Heart right ventricle (tissue), 16 donors: ENCODE measurements at regions of chr11 and their contacts with region 1.

Region 1: DNA sequence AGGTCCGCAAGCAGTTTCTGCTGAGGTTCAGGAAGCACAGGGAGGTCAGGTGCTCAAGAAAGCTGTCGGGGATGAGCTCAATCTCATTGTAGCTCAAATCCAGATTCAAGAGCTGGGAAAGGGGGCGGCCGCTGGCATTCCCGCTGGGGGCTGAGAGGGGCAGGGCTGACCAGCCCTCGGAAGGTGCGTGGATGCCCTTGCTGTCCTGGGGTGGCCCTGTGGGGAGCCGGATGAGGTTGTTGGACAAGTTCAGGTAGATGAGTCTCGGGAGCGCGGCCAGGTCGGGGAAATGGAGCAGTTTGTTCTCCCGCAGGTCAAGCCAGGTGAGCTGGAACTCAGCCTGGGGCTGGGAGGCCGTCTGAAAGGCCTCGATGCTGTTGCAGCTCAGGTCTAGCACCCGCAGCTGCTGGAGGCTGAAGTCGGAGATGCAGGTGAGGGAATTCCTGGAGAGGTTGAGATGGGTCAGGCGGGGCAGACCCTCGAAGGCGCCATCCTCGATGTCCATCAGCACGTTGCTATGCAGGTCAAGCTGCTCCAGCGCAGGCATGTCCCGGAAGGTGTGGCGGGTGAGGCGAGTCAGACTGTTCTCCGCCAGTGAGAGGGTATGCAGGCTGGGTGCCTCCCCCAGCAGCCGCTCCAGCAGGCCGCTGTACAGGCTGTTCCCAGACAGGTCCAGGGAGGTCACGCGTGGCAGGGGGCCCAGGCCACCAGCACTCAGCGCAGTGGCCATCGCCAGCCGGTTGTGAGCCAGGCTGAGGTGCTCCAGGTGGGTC is 9.8 kb downstream of the LRRC32 start:
- DNase-seq: no peak
- ATAC-seq: peak in 1 of 8 donors; percentile 11
- H3K4me3 ChIP-seq: no peak overlapping the region
- H3K27ac ChIP-seq: no peak overlapping the region
- H3K4me1 ChIP-seq: peaks cover 8 to 84% (median 53%) of the 10 kb centered on the region in 9 donors
- H3K27me3 ChIP-seq: no peaks in the 10 kb centered on the region
- CTCF ChIP-seq: no peak

Region 2: DNA sequence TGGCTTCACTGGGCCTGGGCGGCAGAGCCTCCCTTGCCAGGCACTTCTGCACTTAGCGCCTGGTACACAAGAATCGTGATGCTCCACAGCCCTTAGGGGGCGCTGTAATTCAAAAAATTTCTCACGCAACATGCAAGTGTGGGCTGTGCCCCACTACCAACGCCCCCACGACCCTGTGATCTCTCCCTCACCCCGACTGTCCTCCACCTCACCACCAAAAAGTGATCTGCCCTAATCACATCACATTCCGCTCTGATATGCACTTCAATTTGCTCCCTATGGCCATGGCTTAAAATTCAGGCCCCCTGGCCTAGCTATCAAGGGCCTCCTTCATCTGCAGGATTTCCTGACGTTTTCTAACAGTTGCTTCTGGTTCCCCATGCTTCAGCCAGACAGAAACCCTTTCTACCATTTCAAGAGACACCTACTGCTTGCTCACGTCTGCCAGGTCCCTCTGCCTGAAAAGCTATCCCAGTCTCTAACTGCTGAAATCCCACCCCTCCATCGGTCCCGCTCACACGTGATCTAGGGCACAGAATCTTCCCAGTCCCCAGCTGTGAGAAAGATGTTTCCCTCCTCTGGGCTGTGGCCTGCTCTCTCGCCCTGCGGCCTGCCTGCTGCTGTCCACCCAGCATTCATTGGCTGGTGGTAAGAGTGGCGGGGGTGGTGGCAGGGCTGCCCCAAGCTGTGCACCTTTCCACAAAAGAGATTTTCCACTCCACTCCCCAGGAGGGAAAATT is 37.8 kb after region 1 on chr11:
- intact Hi-C with region 1: loop called in 1 of 10 experiments (anchors 1 kb)
- DNase-seq: no peak
- ATAC-seq: no peak
- H3K4me3 ChIP-seq: no peak overlapping the region
- H3K27ac ChIP-seq: no peak overlapping the region
- H3K4me1 ChIP-seq: peaks cover 0 to 18% (median 0%) of the 10 kb centered on the region in 9 donors
- H3K27me3 ChIP-seq: no peaks in the 10 kb centered on the region
- CTCF ChIP-seq: peak in 1 of 9 donors; percentile 26

Region 3: GRCh38 chr11:76752321-76753185 is 91.8 kb after region 1 on chr11:
- intact Hi-C with region 1: no loop called
- DNase-seq: peak; percentile 83 to 87
- ATAC-seq: peak; percentile 83 to 95 (median 92)
- H3K4me3 ChIP-seq: peak overlapping the region in 3 of 10 donors; percentile 6 to 15 (median 11)
- H3K27ac ChIP-seq: peak overlapping the region in 7 of 10 donors; percentile 10 to 71 (median 62)
- H3K4me1 ChIP-seq: peaks cover 0 to 41% (median 18%) of the 10 kb centered on the region in 9 donors
- H3K27me3 ChIP-seq: no peaks in the 10 kb centered on the region
- CTCF ChIP-seq: no peak

Region 4: GRCh38 chr11:77187776-77188632 is 527.3 kb after region 1 on chr11:
- intact Hi-C with region 1: no loop called
- DNase-seq: peak; percentile 78 to 83
- ATAC-seq: peak; percentile 79 to 92 (median 86)
- H3K4me3 ChIP-seq: no peak overlapping the region
- H3K27ac ChIP-seq: no peak overlapping the region
- H3K4me1 ChIP-seq: no peaks in the 10 kb centered on the region
- H3K27me3 ChIP-seq: no peaks in the 10 kb centered on the region
- CTCF ChIP-seq: peak; percentile 68 to 94 (median 91)